K562 (cell line): ENCODE measurements at regions of chr6 and their contacts with region 1.

Region 1: GRCh38 chr6:82783587-82784236 is 281.9 kb downstream of the UBE3D start:
- DNase-seq: peak in 3 of 4 experiments; percentile 3 to 14 (median 10)
- ATAC-seq: peak; percentile 87
- H3K4me3 ChIP-seq: no peak overlapping the region
- H3K27ac ChIP-seq: no peak overlapping the region
- H3K4me1 ChIP-seq: no peaks in the 10 kb centered on the region
- H3K27me3 ChIP-seq: no peaks in the 10 kb centered on the region
- CTCF ChIP-seq: peak; percentile 22 to 29 (median 23); a peak in 3 of 6 replicates
- EP300 ChIP-seq: no peak
- POLR2A ChIP-seq: no peak
- RAD21 ChIP-seq: no peak; a peak in 1 of 4 replicates

Region 2: GRCh38 chr6:81491454-81492101 is 1292.1 kb before region 1 on chr6:
- CTCF ChIA-PET with region 1: no interaction called
- POLR2A ChIA-PET with region 1: no interaction called
- in situ Hi-C with region 1: loop called (anchors 10 kb)
- intact Hi-C with region 1: no loop called
- DNase-seq: no peak
- ATAC-seq: no peak
- H3K4me3 ChIP-seq: no peak overlapping the region
- H3K27ac ChIP-seq: no peak overlapping the region
- H3K4me1 ChIP-seq: no peaks in the 10 kb centered on the region
- H3K27me3 ChIP-seq: no peaks in the 10 kb centered on the region
- CTCF ChIP-seq: no peak
- EP300 ChIP-seq: no peak
- POLR2A ChIP-seq: no peak
- RAD21 ChIP-seq: no peak

Region 3: DNA sequence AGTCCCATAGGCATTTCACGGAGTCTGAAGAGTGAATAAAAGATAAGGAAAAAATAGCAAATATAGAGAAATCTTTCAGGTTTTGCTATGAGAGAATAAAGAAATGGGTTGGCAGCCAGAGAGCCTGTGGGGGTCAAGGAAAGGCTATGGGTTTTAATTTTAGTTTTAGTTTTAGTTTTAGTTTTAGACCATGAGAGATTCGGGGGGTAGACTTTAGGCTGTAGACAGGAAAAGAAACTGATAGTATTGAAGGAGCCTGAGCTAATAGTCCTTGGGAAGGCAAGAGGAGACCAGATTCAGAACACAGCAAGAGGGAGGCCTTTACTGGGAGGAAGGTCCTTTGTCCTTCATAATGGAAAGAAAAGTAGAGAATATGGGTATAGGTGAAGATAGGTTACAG is 303.0 kb after region 1 on chr6:
- CTCF ChIA-PET with region 1: no interaction called
- POLR2A ChIA-PET with region 1: no interaction called
- in situ Hi-C with region 1: no loop called
- intact Hi-C with region 1: no loop called
- DNase-seq: no peak
- ATAC-seq: no peak
- H3K4me3 ChIP-seq: no peak overlapping the region
- H3K27ac ChIP-seq: no peak overlapping the region
- H3K4me1 ChIP-seq: no peaks in the 10 kb centered on the region
- H3K27me3 ChIP-seq: no peaks in the 10 kb centered on the region
- CTCF ChIP-seq: no peak
- EP300 ChIP-seq: no peak
- POLR2A ChIP-seq: no peak
- RAD21 ChIP-seq: no peak